Activated CD4-positive, alpha-beta T cell treated with anti-CD3 and anti-CD28 coated beads for 36 hours (primary cell): ENCODE measurements at regions of chr20 and their contacts with region 1.

Region 1: DNA sequence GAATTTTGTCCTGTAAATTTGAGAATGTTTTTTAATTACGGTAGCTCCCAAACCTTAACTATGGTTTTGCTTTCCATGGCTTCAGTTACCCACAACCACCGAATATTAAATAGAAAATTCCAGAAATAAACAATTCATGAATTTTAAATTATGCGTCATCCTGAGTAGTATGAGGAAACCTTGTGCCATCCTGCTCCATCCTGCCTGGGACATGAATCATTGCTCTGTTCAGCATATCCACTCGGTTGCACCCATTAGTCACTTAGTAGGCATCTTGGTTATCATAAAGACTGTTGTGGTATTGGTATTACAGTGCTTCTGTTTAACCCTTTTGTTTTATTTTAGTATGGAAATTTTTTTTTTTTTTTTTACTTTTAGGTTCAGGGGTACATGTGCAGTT is 39.7 kb downstream of the KCNS1 start:
- DNase-seq: peak; percentile 32
- ATAC-seq: peak; percentile 94
- H3K4me3 Mint-ChIP-seq: no peak overlapping the region
- H3K27ac Mint-ChIP-seq: no peak overlapping the region
- H3K4me1 Mint-ChIP-seq: peaks cover 76% of the 10 kb centered on the region
- H3K27me3 Mint-ChIP-seq: no peaks in the 10 kb centered on the region

Region 2: GRCh38 chr20:45080867-45081624 is 19.8 kb after region 1 on chr20:
- CTCF ChIA-PET with region 1: no interaction called
- POLR2A ChIA-PET with region 1: interaction called, 16 read pairs
- intact Hi-C with region 1: no loop called
- DNase-seq: no peak
- ATAC-seq: peak; percentile 33
- H3K4me3 Mint-ChIP-seq: no peak overlapping the region
- H3K27ac Mint-ChIP-seq: no peak overlapping the region
- H3K4me1 Mint-ChIP-seq: no peaks in the 10 kb centered on the region
- H3K27me3 Mint-ChIP-seq: no peaks in the 10 kb centered on the region